Activated CD4-positive, alpha-beta T cell treated with anti-CD3 and anti-CD28 coated beads, Interleukin-2, amount 10 ng/mL, durations not matched to agents 24 days and 14 days (primary cell): ENCODE measurements at regions of chr9 and their contacts with region 1.

Region 1: GRCh38 chr9:113591001-113591898 is 127.7 kb downstream of the RGS3 start:
- DNase-seq: peak; percentile 89
- H3K4me3 Mint-ChIP-seq: no peak overlapping the region
- H3K27ac Mint-ChIP-seq: peak overlapping the region; percentile 34
- H3K4me1 Mint-ChIP-seq: peaks cover 42% of the 10 kb centered on the region
- H3K27me3 Mint-ChIP-seq: no peaks in the 10 kb centered on the region

Region 2: GRCh38 chr9:113446323-113446740 is 144.9 kb before region 1 on chr9:
- intact Hi-C with region 1: loop called (anchors 1 kb)
- DNase-seq: peak; percentile 70
- H3K4me3 Mint-ChIP-seq: no peak overlapping the region
- H3K27ac Mint-ChIP-seq: no peak overlapping the region
- H3K4me1 Mint-ChIP-seq: peaks cover 2% of the 10 kb centered on the region
- H3K27me3 Mint-ChIP-seq: no peaks in the 10 kb centered on the region

Region 3: GRCh38 chr9:113558632-113559502 is 32.4 kb before region 1 on chr9:
- intact Hi-C with region 1: no loop called
- DNase-seq: no peak
- H3K4me3 Mint-ChIP-seq: no peak overlapping the region
- H3K27ac Mint-ChIP-seq: peak overlapping the region; percentile 62
- H3K4me1 Mint-ChIP-seq: peaks cover 36% of the 10 kb centered on the region
- H3K27me3 Mint-ChIP-seq: no peaks in the 10 kb centered on the region

Region 4: GRCh38 chr9:113614843-113615648 is 23.8 kb after region 1 on chr9:
- intact Hi-C with region 1: loop called (anchors 2 kb)
- DNase-seq: no peak
- H3K4me3 Mint-ChIP-seq: peak overlapping the region; percentile 70
- H3K27ac Mint-ChIP-seq: peak overlapping the region; percentile 95
- H3K4me1 Mint-ChIP-seq: peaks cover 46% of the 10 kb centered on the region
- H3K27me3 Mint-ChIP-seq: no peaks in the 10 kb centered on the region

Region 5: GRCh38 chr9:113622600-113623400 is 31.6 kb after region 1 on chr9:
- intact Hi-C with region 1: loop called (anchors 1 kb)
- DNase-seq: peak; percentile 78
- H3K4me3 Mint-ChIP-seq: peak overlapping the region; percentile 52
- H3K27ac Mint-ChIP-seq: peak overlapping the region; percentile 96
- H3K4me1 Mint-ChIP-seq: peaks cover 44% of the 10 kb centered on the region
- H3K27me3 Mint-ChIP-seq: no peaks in the 10 kb centered on the region